ENCODE measurements at regions of chr7 and their contacts with region 1.

Region 1: DNA sequence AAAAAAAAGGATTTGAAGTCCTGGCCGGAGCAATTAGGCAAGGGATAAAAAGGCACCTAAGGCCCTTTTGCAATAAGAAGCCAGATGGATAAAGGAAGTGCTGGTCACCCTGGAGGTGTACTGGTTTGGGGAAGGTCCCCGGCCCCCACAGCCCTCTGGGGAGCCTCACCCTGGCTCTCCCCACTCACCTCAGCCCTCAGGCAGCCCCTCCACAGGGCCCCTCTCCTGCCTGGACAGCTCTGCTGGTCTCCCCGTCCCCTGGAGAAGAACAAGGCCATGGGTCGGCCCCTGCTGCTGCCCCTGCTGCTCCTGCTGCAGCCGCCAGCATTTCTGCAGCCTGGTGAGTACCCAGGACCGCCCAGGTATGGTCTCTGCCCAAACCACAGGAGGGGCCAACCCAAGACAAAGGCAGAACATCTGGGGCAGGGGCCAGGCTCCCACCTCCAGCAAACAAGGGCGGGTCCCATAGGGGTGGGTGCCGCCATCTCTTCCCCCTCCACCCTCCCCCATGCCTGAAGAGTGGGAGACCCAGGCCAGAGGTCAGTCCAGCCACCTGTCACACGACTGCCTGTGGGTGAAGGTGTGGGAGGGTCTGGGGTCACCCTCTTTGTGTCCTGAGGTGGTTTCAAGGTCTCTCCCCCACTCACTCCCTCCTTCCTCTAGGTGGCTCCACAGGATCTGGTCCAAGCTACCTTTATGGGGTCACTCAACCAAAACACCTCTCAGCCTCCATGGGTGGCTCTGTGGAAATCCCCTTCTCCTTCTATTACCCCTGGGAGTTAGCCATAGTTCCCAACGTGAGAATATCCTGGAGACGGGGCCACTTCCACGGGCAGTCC is at the start of gene PILRB:
- DNase-seq: no peak
- ATAC-seq: peak in 2 of 4 donors; percentile 20 to 21
- H3K4me3 ChIP-seq: no peak within 1 kb of the TSS
- H3K27ac ChIP-seq: peak within 1 kb of the TSS in 1 of 12 donors; percentile 20
- H3K4me1 ChIP-seq: no peaks in the 10 kb centered on the region
- H3K27me3 ChIP-seq: no peaks in the 10 kb centered on the region
- CTCF ChIP-seq: no peak
- POLR2A ChIP-seq: no peak
- total RNA-seq, gene PILRB: 6.2 to 15.1 (median 10.0) TPM

Region 2: DNA sequence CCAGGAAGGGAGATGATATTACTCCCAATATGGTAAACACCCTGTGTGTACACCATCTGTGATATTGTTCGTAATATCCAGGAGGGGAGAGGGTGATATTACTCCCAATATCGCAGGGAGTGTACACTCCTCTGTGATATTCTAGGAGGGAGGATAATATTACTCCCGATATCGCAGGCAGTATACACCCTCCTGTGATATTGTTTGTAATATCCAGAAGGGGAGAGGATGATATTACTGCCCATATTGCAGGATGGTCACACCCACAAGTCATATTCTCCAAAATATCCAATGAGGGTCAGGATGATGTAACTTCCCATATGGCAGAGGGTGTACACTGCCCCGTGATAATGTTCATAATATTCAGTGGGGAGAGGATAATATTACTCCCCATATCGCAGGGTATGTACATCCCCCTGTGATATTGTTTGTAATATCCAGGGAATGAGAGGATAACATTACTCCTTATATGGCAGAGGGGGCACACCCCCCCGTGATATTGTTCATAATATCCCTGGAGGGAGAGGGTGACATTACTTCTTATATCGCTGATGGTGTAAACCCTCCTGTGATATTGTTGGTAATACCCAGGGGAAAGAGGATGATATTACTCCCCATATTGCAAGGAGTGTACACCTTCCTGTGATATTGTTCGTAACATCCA is 399.6 kb before region 1 on chr7:
- intact Hi-C with region 1: no loop called
- DNase-seq: no peak
- ATAC-seq: no peak
- H3K4me3 ChIP-seq: no peak overlapping the region
- H3K27ac ChIP-seq: no peak overlapping the region
- H3K4me1 ChIP-seq: no peaks in the 10 kb centered on the region
- H3K27me3 ChIP-seq: peaks cover 0 to 63% (median 25%) of the 10 kb centered on the region in 9 donors
- CTCF ChIP-seq: no peak
- POLR2A ChIP-seq: no peak

Region 3: GRCh38 chr7:100418930-100419659 is 60.8 kb after region 1 on chr7:
- intact Hi-C with region 1: loop called in 1 of 10 experiments (anchors 10 kb)
- DNase-seq: no peak
- ATAC-seq: no peak
- H3K4me3 ChIP-seq: no peak overlapping the region
- H3K27ac ChIP-seq: no peak overlapping the region
- H3K4me1 ChIP-seq: no peaks in the 10 kb centered on the region
- H3K27me3 ChIP-seq: no peaks in the 10 kb centered on the region
- CTCF ChIP-seq: no peak
- POLR2A ChIP-seq: no peak

Region 4: GRCh38 chr7:100428967-100429636 is 70.9 kb after region 1 on chr7:
- intact Hi-C with region 1: no loop called
- DNase-seq: peak; percentile 100
- ATAC-seq: peak; percentile 83 to 87 (median 86)
- H3K4me3 ChIP-seq: peak overlapping the region; percentile 66 to 99 (median 90)
- H3K27ac ChIP-seq: peak overlapping the region; percentile 96 to 100 (median 99)
- H3K4me1 ChIP-seq: peaks cover 0 to 47% (median 30%) of the 10 kb centered on the region in 12 donors
- H3K27me3 ChIP-seq: no peaks in the 10 kb centered on the region
- CTCF ChIP-seq: peak in 6 of 12 donors; percentile 11 to 39 (median 20)
- POLR2A ChIP-seq: peak in 1 of 2 donors; percentile 72

Measured in heart left ventricle (tissue), 16 donors.